CD8-positive, alpha-beta T cell (primary cell): ENCODE measurements at regions of chr3 and their contacts with region 1.

Region 1: GRCh38 chr3:142394921-142395622 is 52.8 kb downstream of the XRN1 start:
- DNase-seq: no peak
- ATAC-seq: no peak
- H3K4me3 ChIP-seq: no peak overlapping the region
- H3K4me3 Mint-ChIP-seq: no peak overlapping the region
- H3K27ac ChIP-seq: no peak overlapping the region
- H3K27ac Mint-ChIP-seq: no peak overlapping the region
- H3K4me1 ChIP-seq: no peaks in the 10 kb centered on the region
- H3K4me1 Mint-ChIP-seq: no peaks in the 10 kb centered on the region
- H3K27me3 ChIP-seq: no peaks in the 10 kb centered on the region
- H3K27me3 Mint-ChIP-seq: no peaks in the 10 kb centered on the region
- CTCF ChIP-seq: no peak

Region 2: GRCh38 chr3:142417302-142417701 is 22.2 kb after region 1 on chr3:
- CTCF ChIA-PET with region 1: no interaction called
- POLR2A ChIA-PET with region 1: no interaction called
- intact Hi-C with region 1: no loop called
- DNase-seq: no peak
- ATAC-seq: no peak
- H3K4me3 ChIP-seq: no peak overlapping the region
- H3K4me3 Mint-ChIP-seq: no peak overlapping the region
- H3K27ac ChIP-seq: no peak overlapping the region
- H3K27ac Mint-ChIP-seq: no peak overlapping the region
- H3K4me1 ChIP-seq: no peaks in the 10 kb centered on the region
- H3K4me1 Mint-ChIP-seq: no peaks in the 10 kb centered on the region
- H3K27me3 ChIP-seq: no peaks in the 10 kb centered on the region
- H3K27me3 Mint-ChIP-seq: no peaks in the 10 kb centered on the region
- CTCF ChIP-seq: no peak

Region 3: DNA sequence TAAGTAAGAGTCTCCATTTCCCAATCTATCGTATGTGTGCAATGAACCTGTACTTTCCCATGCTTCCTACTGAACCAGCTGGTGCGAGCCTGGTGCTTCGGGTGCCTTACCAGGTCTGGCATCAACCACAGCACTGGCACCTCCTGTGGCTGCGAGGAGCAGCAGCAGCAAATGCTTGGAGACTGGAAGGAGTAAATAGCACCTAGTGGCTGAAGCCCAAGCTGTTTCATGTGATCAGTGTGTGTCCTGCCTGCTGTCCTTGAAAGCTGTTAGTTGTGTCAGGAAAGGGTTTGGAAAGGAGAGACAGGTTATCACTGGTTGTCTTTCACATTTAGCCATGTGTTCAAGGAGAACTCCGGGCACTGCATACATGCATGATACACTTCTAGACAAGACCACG is 462.0 kb after region 1 on chr3:
- CTCF ChIA-PET with region 1: no interaction called
- POLR2A ChIA-PET with region 1: no interaction called
- intact Hi-C with region 1: no loop called
- DNase-seq: no peak
- ATAC-seq: no peak
- H3K4me3 ChIP-seq: no peak overlapping the region
- H3K4me3 Mint-ChIP-seq: no peak overlapping the region
- H3K27ac ChIP-seq: no peak overlapping the region
- H3K27ac Mint-ChIP-seq: no peak overlapping the region
- H3K4me1 ChIP-seq: no peaks in the 10 kb centered on the region
- H3K4me1 Mint-ChIP-seq: no peaks in the 10 kb centered on the region
- H3K27me3 ChIP-seq: no peaks in the 10 kb centered on the region
- H3K27me3 Mint-ChIP-seq: peaks cover 7% of the 10 kb centered on the region
- CTCF ChIP-seq: no peak

Region 4: DNA sequence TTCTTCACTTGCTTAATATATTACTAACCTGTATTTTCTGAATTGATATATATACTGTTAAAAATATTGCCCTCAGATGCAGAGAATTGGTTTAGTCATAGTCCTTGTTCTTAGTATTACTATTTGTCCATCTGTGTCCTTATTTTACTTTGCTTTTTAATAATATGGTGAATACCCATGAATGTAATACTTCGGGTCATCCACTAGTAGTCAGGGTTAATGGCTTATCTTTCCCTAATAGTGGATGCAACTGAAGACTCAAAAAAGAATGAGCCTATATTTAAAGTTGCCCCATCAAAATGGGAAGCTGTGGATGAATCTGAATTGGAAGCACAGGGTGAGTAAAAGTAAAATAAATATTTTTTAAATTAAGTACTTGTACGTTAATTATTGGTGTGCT is 642.8 kb after region 1 on chr3:
- CTCF ChIA-PET with region 1: no interaction called
- POLR2A ChIA-PET with region 1: no interaction called
- intact Hi-C with region 1: loop called in 1 of 2 experiments (anchors 5 kb)
- DNase-seq: no peak
- ATAC-seq: no peak
- H3K4me3 ChIP-seq: no peak overlapping the region
- H3K4me3 Mint-ChIP-seq: no peak overlapping the region
- H3K27ac ChIP-seq: no peak overlapping the region
- H3K27ac Mint-ChIP-seq: no peak overlapping the region
- H3K4me1 ChIP-seq: no peaks in the 10 kb centered on the region
- H3K4me1 Mint-ChIP-seq: peaks cover 8% of the 10 kb centered on the region
- H3K27me3 ChIP-seq: no peaks in the 10 kb centered on the region
- H3K27me3 Mint-ChIP-seq: no peaks in the 10 kb centered on the region
- CTCF ChIP-seq: no peak